BJ (cell line): ENCODE measurements at regions of chr4 and their contacts with region 1.

Region 1: DNA sequence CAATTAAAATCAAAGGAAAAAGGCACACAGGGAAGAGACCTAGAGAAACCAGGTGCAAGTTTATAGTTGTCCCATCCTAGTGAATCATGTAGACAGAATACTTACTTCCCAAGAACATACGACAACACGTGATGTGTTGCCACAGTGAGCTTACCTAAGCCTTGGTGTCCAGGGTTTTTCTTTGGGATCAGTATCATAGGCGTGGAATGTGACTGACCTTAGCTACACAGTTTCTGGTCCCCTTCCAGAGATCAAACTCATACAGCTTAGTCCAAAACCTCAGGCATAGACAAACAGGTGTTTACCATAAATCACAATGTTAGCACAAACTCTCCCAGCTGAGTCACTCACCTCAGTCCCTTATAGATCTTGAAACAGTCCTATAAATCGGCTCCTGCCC is 17.7 kb downstream of the SLC25A31 start:
- DNase-seq: no peak
- H3K4me3 ChIP-seq: no peak overlapping the region
- H3K27me3 ChIP-seq: no peaks in the 10 kb centered on the region; the same call in none of the 2 replicates
- CTCF ChIP-seq: no peak

Region 2: DNA sequence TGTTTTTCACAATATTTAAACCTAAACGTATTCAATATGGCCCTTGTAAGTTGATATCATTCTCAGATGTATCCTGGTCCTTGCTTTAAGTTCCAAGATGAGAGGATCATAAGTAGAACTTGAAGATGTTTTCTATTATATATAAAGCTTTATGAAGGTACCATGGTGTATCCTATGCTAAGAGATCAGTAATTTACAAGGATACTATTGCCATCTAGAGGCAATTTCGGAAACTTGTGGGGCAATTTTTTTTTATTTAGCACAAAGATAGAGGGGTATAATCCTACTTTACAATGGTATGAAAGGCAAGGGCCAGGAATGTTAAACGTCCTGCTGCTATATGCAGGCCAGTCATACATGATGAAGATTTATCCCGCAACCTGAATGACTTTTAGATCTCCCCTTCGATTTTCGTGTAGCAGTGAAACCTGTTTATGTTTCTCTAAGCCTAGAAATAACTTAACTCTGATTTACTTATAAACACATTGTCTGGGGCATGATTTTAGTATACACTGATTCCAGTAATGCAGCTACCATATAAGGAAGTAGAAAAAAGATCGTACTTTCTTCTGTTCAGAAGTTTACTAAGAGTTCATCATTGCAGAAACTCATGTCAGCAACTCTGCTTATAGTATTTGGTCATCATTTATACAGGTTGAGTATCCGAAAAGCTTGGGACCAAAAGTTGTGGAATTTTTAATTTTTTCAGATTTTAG is 15.1 kb before region 1 on chr4:
- CTCF ChIA-PET with region 1: interaction called, 16 read pairs
- POLR2A ChIA-PET with region 1: no interaction called
- DNase-seq: no peak
- H3K4me3 ChIP-seq: no peak overlapping the region
- H3K27me3 ChIP-seq: no peaks in the 10 kb centered on the region
- CTCF ChIP-seq: peak; percentile 63